Heart left ventricle (tissue), 16 donors: ENCODE measurements at regions of chr7 and their contacts with region 1.

Region 1: GRCh38 chr7:41977151-41977651 is 259.8 kb downstream of the GLI3 start:
- DNase-seq: peak in 3 of 5 donors; percentile 26 to 45 (median 40)
- ATAC-seq: peak; percentile 34 to 71 (median 67)
- H3K4me3 ChIP-seq: no peak overlapping the region
- H3K27ac ChIP-seq: no peak overlapping the region
- H3K4me1 ChIP-seq: peaks cover 0 to 30% (median 7%) of the 10 kb centered on the region in 12 donors
- H3K27me3 ChIP-seq: no peaks in the 10 kb centered on the region
- CTCF ChIP-seq: peak; percentile 52 to 78 (median 68)
- POLR2A ChIP-seq: no peak

Region 2: DNA sequence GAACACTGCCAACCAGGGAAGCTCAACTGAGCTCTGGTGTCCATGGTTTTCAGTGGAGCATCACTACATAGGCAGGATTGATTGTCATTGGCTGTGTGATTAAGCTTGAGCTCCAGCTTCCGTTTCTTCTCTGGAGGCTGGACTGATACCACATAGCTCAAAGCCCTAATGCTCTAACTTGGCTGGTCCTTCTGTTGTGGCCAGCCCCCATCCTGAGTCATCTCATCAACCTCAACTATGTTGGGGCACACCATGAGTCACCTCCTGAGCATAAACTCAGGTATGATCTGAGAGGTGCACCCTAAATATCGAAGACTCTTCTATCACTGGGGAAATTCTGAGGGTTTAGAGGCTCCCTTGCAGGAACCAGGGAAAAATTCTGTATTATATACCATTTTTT is 159.8 kb before region 1 on chr7:
- intact Hi-C with region 1: no loop called
- DNase-seq: no peak
- ATAC-seq: no peak
- H3K4me3 ChIP-seq: no peak overlapping the region
- H3K27ac ChIP-seq: no peak overlapping the region
- H3K4me1 ChIP-seq: peaks cover 0 to 6% (median 0%) of the 10 kb centered on the region in 12 donors
- H3K27me3 ChIP-seq: no peaks in the 10 kb centered on the region
- CTCF ChIP-seq: no peak
- POLR2A ChIP-seq: no peak

Region 3: GRCh38 chr7:41940760-41941343 is 36.3 kb before region 1 on chr7:
- intact Hi-C with region 1: loop called in 4 of 10 experiments (anchors 1 to 5 kb)
- DNase-seq: peak in 4 of 5 donors; percentile 57 to 61 (median 58)
- ATAC-seq: peak; percentile 70 to 86 (median 82)
- H3K4me3 ChIP-seq: no peak overlapping the region
- H3K27ac ChIP-seq: no peak overlapping the region
- H3K4me1 ChIP-seq: peaks cover 0 to 13% (median 5%) of the 10 kb centered on the region in 12 donors
- H3K27me3 ChIP-seq: peaks cover 0 to 18% (median 9%) of the 10 kb centered on the region in 9 donors
- CTCF ChIP-seq: peak; percentile 83 to 96 (median 90)
- POLR2A ChIP-seq: peak in 1 of 2 donors; percentile 3

Region 4: DNA sequence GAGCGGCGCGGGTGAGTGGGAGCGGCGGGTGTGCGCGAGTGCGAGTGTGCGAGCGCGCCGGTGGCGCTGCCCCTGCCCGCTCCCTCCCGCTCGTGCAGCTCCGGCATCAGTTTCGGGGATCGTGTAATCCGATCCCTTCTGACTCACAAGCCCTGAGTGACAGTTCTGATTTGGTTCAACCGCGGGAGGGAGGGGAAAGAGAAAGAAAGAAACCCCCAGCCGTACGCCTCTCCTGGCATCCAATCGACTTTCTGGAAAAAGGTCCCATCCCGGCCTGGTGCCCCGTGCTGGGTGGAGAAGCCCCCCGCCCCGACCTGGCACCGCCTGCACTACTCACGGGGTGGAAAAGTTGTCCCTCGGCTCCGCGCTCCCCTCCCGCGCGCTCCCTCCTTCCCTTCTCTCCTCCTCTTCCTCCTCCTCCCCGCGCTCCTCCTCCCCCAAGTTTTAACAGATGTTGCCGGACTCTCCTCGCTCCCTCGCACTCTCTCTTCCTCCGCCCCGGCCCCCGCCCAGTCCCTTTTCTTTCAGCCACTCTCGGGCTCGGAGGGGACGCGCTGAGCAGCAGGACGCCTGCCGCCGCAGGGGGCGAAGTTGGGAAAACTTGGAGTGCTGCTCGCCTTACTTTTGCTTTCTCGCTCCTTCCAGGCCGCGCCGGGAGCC is 260.1 kb after region 1 on chr7 and contains the start of gene GLI3:
- intact Hi-C with region 1: loop called in 3 of 10 experiments (anchors 2 to 10 kb)
- DNase-seq: peak; percentile 88 to 89 (median 89)
- ATAC-seq: peak; percentile 85 to 90 (median 90)
- H3K4me3 ChIP-seq: peak within 1 kb of the TSS; percentile 42 to 95 (median 79)
- H3K27ac ChIP-seq: peak within 1 kb of the TSS; percentile 64 to 95 (median 86)
- H3K4me1 ChIP-seq: peaks cover 0 to 16% (median 8%) of the 10 kb centered on the region in 12 donors
- H3K27me3 ChIP-seq: peaks cover 0 to 40% (median 0%) of the 10 kb centered on the region in 9 donors
- CTCF ChIP-seq: peak in 7 of 12 donors; percentile 6 to 56 (median 27)
- POLR2A ChIP-seq: peak in 1 of 2 donors; percentile 41
- total RNA-seq, gene GLI3: 2.0 to 14.4 (median 6.4) TPM

Region 5: DNA sequence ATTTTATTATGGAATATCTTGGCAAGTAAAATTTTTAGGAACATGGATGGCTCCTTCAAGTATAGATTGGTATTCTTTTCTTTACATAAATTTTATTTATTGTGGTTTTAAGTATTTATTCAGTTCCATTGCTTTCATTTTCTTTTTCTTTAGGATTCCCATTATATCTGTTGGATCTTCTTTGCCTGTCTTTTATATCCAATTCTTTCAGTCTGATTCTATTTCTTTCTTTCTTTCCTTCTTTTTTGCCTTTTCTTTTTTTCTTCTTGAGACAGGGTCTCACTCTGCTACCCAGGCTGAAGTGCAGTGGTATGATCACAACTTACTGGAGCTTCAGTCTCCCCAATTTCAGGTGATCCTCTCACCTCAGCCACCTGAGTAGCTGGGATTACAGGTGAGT is 334.0 kb after region 1 on chr7:
- intact Hi-C with region 1: loop called in 3 of 10 experiments (anchors 2 to 10 kb)
- DNase-seq: no peak
- ATAC-seq: no peak
- H3K4me3 ChIP-seq: no peak overlapping the region
- H3K27ac ChIP-seq: no peak overlapping the region
- H3K4me1 ChIP-seq: peaks cover 0 to 2% (median 0%) of the 10 kb centered on the region in 12 donors
- H3K27me3 ChIP-seq: no peaks in the 10 kb centered on the region
- CTCF ChIP-seq: no peak
- POLR2A ChIP-seq: no peak

Region 6: DNA sequence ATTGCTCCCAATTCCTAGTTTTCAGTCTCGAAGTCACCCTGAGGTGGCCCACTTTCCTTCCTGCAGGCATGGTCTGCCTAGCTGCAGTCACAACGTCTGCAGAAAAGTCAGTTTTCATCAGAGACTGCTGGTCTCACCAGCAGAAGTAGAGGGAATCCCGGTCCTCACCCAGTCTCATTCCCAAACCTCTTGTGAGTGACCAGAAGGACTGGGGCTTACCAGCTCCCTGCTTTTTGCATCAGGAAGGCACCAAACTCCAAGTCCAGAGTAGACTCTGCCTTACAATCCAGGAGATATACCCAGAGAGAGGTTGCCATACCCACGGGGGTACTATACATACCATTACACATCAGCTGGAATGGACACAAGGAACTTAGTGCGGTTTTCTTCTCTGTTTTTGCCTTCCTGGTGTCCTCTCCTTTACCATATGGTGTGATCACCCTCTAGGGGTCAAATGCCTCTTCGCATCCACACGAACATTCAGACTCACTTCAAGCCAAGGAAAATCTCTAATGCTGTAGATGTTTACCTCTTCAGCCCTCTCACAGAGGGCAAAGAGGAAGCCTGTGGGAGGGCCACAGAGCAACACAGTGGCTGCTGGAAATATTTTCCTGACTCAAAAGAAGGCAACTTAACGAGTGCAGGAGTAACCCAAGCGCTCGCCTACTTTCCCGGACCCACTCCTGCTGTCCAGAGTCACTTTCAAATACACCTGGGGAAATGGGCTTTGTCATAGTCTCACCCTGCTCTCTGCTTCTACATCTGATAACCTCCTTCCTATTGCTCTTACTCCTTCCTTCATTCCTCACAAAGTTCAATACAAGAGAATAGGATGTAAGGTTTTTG is 713.8 kb after region 1 on chr7:
- intact Hi-C with region 1: loop called in 7 of 10 experiments (anchors 5 to 10 kb)
- DNase-seq: no peak
- ATAC-seq: peak; percentile 54 to 80 (median 64)
- H3K4me3 ChIP-seq: no peak overlapping the region
- H3K27ac ChIP-seq: peak overlapping the region in 1 of 12 donors; percentile 63
- H3K4me1 ChIP-seq: peaks cover 0 to 11% (median 3%) of the 10 kb centered on the region in 12 donors
- H3K27me3 ChIP-seq: no peaks in the 10 kb centered on the region
- CTCF ChIP-seq: peak; percentile 16 to 52 (median 34)
- POLR2A ChIP-seq: no peak

Region 7: GRCh38 chr7:42843205-42843800 is 866.1 kb after region 1 on chr7:
- intact Hi-C with region 1: loop called in 5 of 10 experiments (anchors 2 to 10 kb)
- DNase-seq: peak in 4 of 5 donors; percentile 29 to 42 (median 37)
- ATAC-seq: peak; percentile 67 to 90 (median 84)
- H3K4me3 ChIP-seq: peak overlapping the region in 7 of 12 donors; percentile 0 to 40 (median 22)
- H3K27ac ChIP-seq: no peak overlapping the region
- H3K4me1 ChIP-seq: peaks cover 0 to 5% (median 0%) of the 10 kb centered on the region in 12 donors
- H3K27me3 ChIP-seq: peaks cover 0 to 9% (median 0%) of the 10 kb centered on the region in 9 donors
- CTCF ChIP-seq: peak; percentile 35 to 65 (median 52)
- POLR2A ChIP-seq: no peak